Calu3 (cell line): ENCODE measurements at regions of chr1 and their contacts with region 1.

Region 1: DNA sequence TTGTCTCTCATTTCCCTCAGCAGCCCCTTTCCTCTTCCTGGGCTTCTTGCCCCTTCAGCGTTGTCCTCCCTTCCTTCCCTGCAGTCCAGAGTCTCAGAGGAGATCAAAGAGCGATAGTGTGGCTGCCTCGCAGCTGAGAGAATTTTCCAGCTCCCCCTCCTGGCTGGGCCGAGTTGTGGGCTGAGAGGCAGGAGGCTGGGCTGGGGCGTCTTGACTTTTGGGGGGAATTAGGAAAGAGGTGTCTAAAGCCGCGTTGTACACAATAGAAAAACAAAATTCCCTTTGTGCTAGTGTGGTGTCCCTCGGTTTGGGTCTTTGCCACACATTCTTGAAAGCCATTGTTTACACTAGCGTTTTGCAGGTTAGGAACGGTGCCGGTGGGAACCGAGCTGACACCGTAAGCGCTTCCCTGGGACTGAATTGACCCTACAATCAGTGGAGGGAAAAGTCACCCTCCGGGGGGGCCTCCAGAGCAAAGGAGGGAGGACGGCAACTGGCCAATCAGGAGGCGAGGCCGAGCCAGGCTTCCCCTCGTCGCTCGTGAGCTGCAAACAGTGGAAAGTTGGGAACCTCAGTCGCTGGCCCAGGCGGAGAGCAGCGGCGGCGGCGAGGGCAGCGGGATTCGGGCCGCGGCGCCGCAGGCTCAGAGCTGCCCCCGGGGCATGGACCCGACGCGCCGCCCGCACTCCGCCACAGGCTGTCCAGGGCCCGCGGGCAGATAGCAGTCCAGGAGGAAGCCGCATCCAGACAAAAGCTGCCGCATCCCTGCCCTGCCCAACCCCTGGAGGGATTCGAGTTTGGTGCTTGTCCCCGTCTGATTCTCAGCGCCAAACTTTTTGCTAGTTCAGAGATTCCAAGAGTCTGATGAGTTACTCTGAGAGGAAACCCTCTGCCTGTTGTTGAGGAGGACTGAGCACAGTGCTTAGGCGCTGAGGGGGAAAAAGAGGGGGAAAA is at the start of gene HMCN1:
- DNase-seq: peak; percentile 70
- H3K4me3 Mint-ChIP-seq: peak within 1 kb of the TSS; percentile 72
- H3K27ac Mint-ChIP-seq: peak within 1 kb of the TSS; percentile 7
- H3K4me1 Mint-ChIP-seq: peaks cover 16% of the 10 kb centered on the region
- H3K27me3 Mint-ChIP-seq: peaks cover 26% of the 10 kb centered on the region
- CTCF ChIP-seq: peak; percentile 30
- total RNA-seq, gene HMCN1: 0.02 and 0.05 TPM in 2 replicates

Region 2: DNA sequence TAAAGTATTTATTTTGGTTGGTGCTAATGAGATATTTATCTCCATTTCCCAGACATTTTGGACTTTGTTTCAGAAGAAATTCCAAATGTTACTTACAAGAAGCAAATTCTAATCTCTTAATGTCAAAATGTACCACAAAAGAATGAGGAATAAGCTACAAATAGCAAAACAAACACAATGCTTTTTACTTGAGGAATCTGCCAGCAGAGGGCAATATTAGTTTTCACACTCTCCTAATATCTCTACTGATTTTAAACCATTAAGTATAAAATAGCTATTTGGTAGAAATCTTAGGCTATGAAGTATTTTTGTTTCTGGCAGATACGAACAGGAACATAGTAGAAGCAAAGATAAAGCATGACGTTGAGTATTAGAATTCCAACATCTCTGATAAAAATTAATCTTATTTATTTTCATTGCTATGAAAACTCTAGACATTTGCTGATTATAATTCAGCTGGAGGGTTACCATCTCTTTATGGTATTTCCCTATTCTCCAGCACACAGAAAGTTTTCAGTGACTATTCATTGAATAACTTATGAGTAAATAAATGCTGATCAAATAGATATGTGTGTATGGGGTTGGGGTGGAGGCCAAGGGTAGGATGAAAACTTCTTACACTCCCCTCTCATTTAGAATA is 13.3 kb before region 1 on chr1:
- CTCF ChIA-PET with region 1: interaction called, 22 read pairs
- intact Hi-C with region 1: no loop called
- DNase-seq: peak; percentile 18
- H3K4me3 Mint-ChIP-seq: no peak overlapping the region
- H3K27ac Mint-ChIP-seq: no peak overlapping the region
- H3K4me1 Mint-ChIP-seq: peaks cover 8% of the 10 kb centered on the region
- H3K27me3 Mint-ChIP-seq: no peaks in the 10 kb centered on the region
- CTCF ChIP-seq: peak; percentile 63

Region 3: DNA sequence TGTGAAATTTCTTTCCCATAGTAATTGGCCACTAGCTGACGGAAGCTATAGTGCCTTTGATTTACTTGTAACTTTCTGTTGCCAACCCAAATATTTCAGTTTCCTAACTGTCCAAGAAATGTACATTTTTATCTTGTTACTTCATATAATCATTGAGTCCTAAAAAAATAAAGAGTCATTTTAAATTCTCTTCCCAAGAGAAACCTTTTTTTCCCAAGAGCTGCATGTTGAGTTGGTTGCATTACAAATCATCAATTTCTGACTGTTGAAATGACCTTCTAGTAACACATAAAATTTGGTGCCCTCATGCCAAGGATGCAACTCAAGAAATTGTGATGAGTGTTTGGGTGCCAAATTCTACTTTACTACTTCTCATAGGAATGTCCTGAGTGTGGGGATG is 61.1 kb after region 1 on chr1:
- CTCF ChIA-PET with region 1: no interaction called
- intact Hi-C with region 1: no loop called
- DNase-seq: no peak
- H3K4me3 Mint-ChIP-seq: no peak overlapping the region
- H3K27ac Mint-ChIP-seq: no peak overlapping the region
- H3K4me1 Mint-ChIP-seq: no peaks in the 10 kb centered on the region
- H3K27me3 Mint-ChIP-seq: no peaks in the 10 kb centered on the region
- CTCF ChIP-seq: no peak